B cell (primary cell): ENCODE measurements at regions of chr1 and their contacts with region 1.

Region 1: GRCh38 chr1:31065310-31066217 is at the start of gene PUM1:
- DNase-seq: peak; percentile 98
- ATAC-seq: peak; percentile 93
- H3K4me3 ChIP-seq: peak within 1 kb of the TSS; percentile 72 to 93 (median 84)
- H3K4me3 Mint-ChIP-seq: peak within 1 kb of the TSS; percentile 100
- H3K27ac ChIP-seq: peak within 1 kb of the TSS; percentile 90 to 94
- H3K27ac Mint-ChIP-seq: peak within 1 kb of the TSS; percentile 99
- H3K4me1 ChIP-seq: peaks cover 25 to 33% of the 10 kb centered on the region in 2 donors
- H3K4me1 Mint-ChIP-seq: peaks cover 40% of the 10 kb centered on the region
- H3K27me3 ChIP-seq: no peaks in the 10 kb centered on the region
- H3K27me3 Mint-ChIP-seq: no peaks in the 10 kb centered on the region
- CTCF ChIP-seq: no peak
- total RNA-seq, gene PUM1: 177 and 179 TPM in 2 replicates

Region 2: GRCh38 chr1:31027693-31028526 is 37.7 kb before region 1 on chr1:
- CTCF ChIA-PET with region 1: no interaction called
- POLR2A ChIA-PET with region 1: interaction called, 5 read pairs
- intact Hi-C with region 1: loop called (anchors 1 kb)
- DNase-seq: peak; percentile 67
- ATAC-seq: peak; percentile 74
- H3K4me3 ChIP-seq: peak overlapping the region in 1 of 5 experiments; percentile 33
- H3K4me3 Mint-ChIP-seq: peak overlapping the region; percentile 40
- H3K27ac ChIP-seq: peak overlapping the region; percentile 13 to 55
- H3K27ac Mint-ChIP-seq: peak overlapping the region; percentile 1
- H3K4me1 ChIP-seq: peaks cover 44 to 45% of the 10 kb centered on the region in 2 donors
- H3K4me1 Mint-ChIP-seq: peaks cover 69% of the 10 kb centered on the region
- H3K27me3 ChIP-seq: no peaks in the 10 kb centered on the region
- H3K27me3 Mint-ChIP-seq: no peaks in the 10 kb centered on the region
- CTCF ChIP-seq: no peak

Region 3: DNA sequence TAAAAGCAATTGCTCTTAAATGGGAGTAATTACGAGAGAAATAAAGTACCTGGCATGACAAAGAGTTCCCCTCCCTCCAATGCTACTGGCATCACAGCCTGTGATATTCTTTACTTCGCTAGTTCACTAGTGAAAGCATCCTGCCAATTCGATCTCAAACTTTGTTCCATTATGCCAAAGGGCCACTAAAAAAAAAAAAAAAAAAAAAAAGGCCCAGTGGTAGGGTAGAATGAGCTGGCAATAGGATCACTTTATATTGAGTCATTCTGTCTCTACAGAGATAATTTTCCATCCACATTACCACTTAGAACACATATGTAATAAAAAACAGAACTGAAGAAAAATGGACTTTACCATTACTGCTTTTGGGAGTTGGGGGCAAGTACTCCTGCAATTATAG is 11.2 kb before region 1 on chr1:
- CTCF ChIA-PET with region 1: interaction called, 3 read pairs
- POLR2A ChIA-PET with region 1: interaction called, 4 read pairs
- intact Hi-C with region 1: loop called (anchors 2 kb)
- DNase-seq: no peak
- ATAC-seq: no peak
- H3K4me3 ChIP-seq: no peak overlapping the region
- H3K4me3 Mint-ChIP-seq: no peak overlapping the region
- H3K27ac ChIP-seq: peak overlapping the region in 1 of 2 donors; percentile 6
- H3K27ac Mint-ChIP-seq: no peak overlapping the region
- H3K4me1 ChIP-seq: peaks cover 18 to 31% of the 10 kb centered on the region in 2 donors
- H3K4me1 Mint-ChIP-seq: peaks cover 47% of the 10 kb centered on the region
- H3K27me3 ChIP-seq: no peaks in the 10 kb centered on the region
- H3K27me3 Mint-ChIP-seq: no peaks in the 10 kb centered on the region
- CTCF ChIP-seq: no peak

Region 4: GRCh38 chr1:31144442-31144841 is 78.9 kb after region 1 on chr1:
- CTCF ChIA-PET with region 1: no interaction called
- POLR2A ChIA-PET with region 1: no interaction called
- intact Hi-C with region 1: no loop called
- DNase-seq: no peak
- ATAC-seq: no peak
- H3K4me3 ChIP-seq: no peak overlapping the region
- H3K4me3 Mint-ChIP-seq: no peak overlapping the region
- H3K27ac ChIP-seq: no peak overlapping the region
- H3K27ac Mint-ChIP-seq: no peak overlapping the region
- H3K4me1 ChIP-seq: no peaks in the 10 kb centered on the region
- H3K4me1 Mint-ChIP-seq: no peaks in the 10 kb centered on the region
- H3K27me3 ChIP-seq: no peaks in the 10 kb centered on the region
- H3K27me3 Mint-ChIP-seq: peaks cover 3% of the 10 kb centered on the region
- CTCF ChIP-seq: no peak

Region 5: DNA sequence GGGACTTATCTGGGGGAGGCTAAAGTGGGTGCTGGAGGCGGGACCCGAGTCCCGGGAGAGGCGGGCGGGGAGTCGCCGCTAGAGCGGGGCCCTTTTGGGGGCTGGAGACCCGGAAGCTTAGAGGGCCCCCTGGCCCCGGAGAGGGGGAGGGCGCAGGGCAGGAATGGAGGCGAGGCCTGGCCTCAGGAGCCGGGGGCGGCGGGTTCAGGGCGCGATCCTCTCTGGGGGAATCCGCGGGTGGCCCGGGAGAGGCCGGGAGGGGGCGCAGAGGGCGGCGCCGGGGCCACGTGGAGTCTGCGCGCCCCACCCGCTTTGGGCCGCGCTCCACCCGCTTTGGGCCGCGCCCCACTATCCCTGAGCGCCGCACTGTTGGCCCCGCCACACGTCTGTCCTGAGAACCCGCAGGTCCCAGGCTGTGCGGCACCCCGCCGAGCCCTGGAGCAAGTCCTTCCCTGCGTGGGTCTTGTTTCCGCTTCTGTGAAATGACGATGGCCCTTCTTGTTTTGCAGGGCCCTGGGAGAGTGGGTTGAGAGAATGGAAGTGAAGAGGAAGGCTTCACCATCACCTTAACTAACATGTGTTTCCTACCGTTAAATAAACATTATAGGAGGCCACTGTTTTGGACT is 89.8 kb after region 1 on chr1:
- CTCF ChIA-PET with region 1: no interaction called
- POLR2A ChIA-PET with region 1: no interaction called
- intact Hi-C with region 1: loop called (anchors 1 kb)
- DNase-seq: peak; percentile 75
- ATAC-seq: peak; percentile 80
- H3K4me3 ChIP-seq: peak overlapping the region; percentile 53 to 76 (median 67)
- H3K4me3 Mint-ChIP-seq: peak overlapping the region; percentile 90
- H3K27ac ChIP-seq: peak overlapping the region in 1 of 2 donors; percentile 39
- H3K27ac Mint-ChIP-seq: peak overlapping the region; percentile 80
- H3K4me1 ChIP-seq: peaks cover 5 to 14% of the 10 kb centered on the region in 2 donors
- H3K4me1 Mint-ChIP-seq: peaks cover 9% of the 10 kb centered on the region
- H3K27me3 ChIP-seq: no peaks in the 10 kb centered on the region
- H3K27me3 Mint-ChIP-seq: no peaks in the 10 kb centered on the region
- CTCF ChIP-seq: peak; percentile 55

Region 6: DNA sequence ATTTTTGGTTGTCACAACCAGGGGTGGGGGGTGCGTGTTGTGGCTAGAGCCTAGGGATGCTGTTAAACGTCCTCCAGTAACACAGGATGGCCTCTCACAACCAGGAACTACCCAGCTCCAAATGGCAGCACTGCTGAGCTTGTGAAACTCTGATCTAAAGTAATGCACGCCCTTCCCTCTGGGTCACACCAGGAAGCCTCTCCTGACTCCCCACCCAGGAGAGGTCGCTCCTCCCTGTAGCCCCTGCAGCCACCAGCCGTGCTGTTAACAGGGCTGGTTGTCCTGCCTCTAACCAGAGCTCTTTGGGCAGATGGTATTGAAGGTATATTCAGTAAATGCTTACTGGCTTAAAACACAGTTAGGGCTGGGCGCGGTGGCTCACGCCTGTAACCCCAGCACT is 100.9 kb after region 1 on chr1:
- CTCF ChIA-PET with region 1: no interaction called
- POLR2A ChIA-PET with region 1: no interaction called
- intact Hi-C with region 1: no loop called
- DNase-seq: no peak
- ATAC-seq: no peak
- H3K4me3 ChIP-seq: no peak overlapping the region
- H3K4me3 Mint-ChIP-seq: no peak overlapping the region
- H3K27ac ChIP-seq: no peak overlapping the region
- H3K27ac Mint-ChIP-seq: no peak overlapping the region
- H3K4me1 ChIP-seq: no peaks in the 10 kb centered on the region
- H3K4me1 Mint-ChIP-seq: peaks cover 3% of the 10 kb centered on the region
- H3K27me3 ChIP-seq: no peaks in the 10 kb centered on the region
- H3K27me3 Mint-ChIP-seq: peaks cover 10% of the 10 kb centered on the region
- CTCF ChIP-seq: no peak

Region 7: GRCh38 chr1:31653717-31654473 is 588.3 kb after region 1 on chr1:
- CTCF ChIA-PET with region 1: no interaction called
- POLR2A ChIA-PET with region 1: interaction called, 14 read pairs
- intact Hi-C with region 1: no loop called
- DNase-seq: no peak
- ATAC-seq: no peak
- H3K4me3 ChIP-seq: no peak overlapping the region
- H3K4me3 Mint-ChIP-seq: no peak overlapping the region
- H3K27ac ChIP-seq: no peak overlapping the region
- H3K27ac Mint-ChIP-seq: no peak overlapping the region
- H3K4me1 ChIP-seq: no peaks in the 10 kb centered on the region
- H3K4me1 Mint-ChIP-seq: no peaks in the 10 kb centered on the region
- H3K27me3 ChIP-seq: peaks cover 0 to 7% (median 0%) of the 10 kb centered on the region in 4 experiments
- H3K27me3 Mint-ChIP-seq: peaks cover 20% of the 10 kb centered on the region
- CTCF ChIP-seq: no peak